ENCODE measurements at regions of chr6 and their contacts with region 1.

Region 1: GRCh38 chr6:18503593-18504231 is 116.6 kb downstream of the RNF144B start:
- DNase-seq: peak; percentile 87
- H3K4me3 Mint-ChIP-seq: peak overlapping the region; percentile 56
- H3K27ac Mint-ChIP-seq: peak overlapping the region; percentile 43
- H3K4me1 Mint-ChIP-seq: peaks cover 21% of the 10 kb centered on the region
- H3K27me3 Mint-ChIP-seq: no peaks in the 10 kb centered on the region
- CTCF ChIP-seq: peak; percentile 93

Region 2: GRCh38 chr6:17584241-17584803 is 919.4 kb before region 1 on chr6:
- CTCF ChIA-PET with region 1: interaction called, 3 read pairs
- POLR2A ChIA-PET with region 1: no interaction called
- intact Hi-C with region 1: loop called (anchors 10 kb)
- DNase-seq: peak; percentile 77
- H3K4me3 Mint-ChIP-seq: no peak overlapping the region
- H3K27ac Mint-ChIP-seq: no peak overlapping the region
- H3K4me1 Mint-ChIP-seq: peaks cover 8% of the 10 kb centered on the region
- H3K27me3 Mint-ChIP-seq: no peaks in the 10 kb centered on the region
- CTCF ChIP-seq: peak; percentile 72

Region 3: GRCh38 chr6:18264219-18264922 is 239.3 kb before region 1 on chr6 and contains the start of gene DEK:
- CTCF ChIA-PET with region 1: interaction called, 5 read pairs
- POLR2A ChIA-PET with region 1: interaction called, 11 read pairs
- intact Hi-C with region 1: loop called (anchors 1 kb)
- DNase-seq: peak; percentile 83
- H3K4me3 Mint-ChIP-seq: peak within 1 kb of the TSS; percentile 96
- H3K27ac Mint-ChIP-seq: peak within 1 kb of the TSS; percentile 81
- H3K4me1 Mint-ChIP-seq: peaks cover 36% of the 10 kb centered on the region
- H3K27me3 Mint-ChIP-seq: no peaks in the 10 kb centered on the region
- CTCF ChIP-seq: peak; percentile 61
- total RNA-seq, gene DEK: 118 and 148 TPM in 2 replicates

Region 4: DNA sequence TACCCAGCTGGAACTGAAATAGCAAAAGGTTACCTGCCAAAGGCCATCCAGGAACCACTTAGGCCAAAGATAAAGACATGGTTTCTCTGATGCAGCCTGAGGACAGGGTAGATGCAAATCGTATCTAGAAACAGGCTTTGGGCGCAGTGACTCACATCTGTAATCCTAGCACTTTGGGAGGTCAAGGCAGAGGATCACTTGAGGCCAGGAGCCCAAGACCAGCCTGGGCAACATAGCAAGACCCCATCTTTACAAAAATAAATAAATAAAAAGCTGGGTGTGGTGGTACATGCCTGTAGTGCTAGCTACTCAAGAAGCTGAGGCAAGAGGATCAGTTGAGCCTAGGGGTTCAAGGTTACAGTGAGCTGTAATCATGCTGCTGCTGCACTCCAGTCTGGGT is 169.5 kb before region 1 on chr6:
- CTCF ChIA-PET with region 1: interaction called, 11 read pairs
- POLR2A ChIA-PET with region 1: no interaction called
- intact Hi-C with region 1: no loop called
- DNase-seq: no peak
- H3K4me3 Mint-ChIP-seq: no peak overlapping the region
- H3K27ac Mint-ChIP-seq: no peak overlapping the region
- H3K4me1 Mint-ChIP-seq: no peaks in the 10 kb centered on the region
- H3K27me3 Mint-ChIP-seq: no peaks in the 10 kb centered on the region
- CTCF ChIP-seq: no peak

Region 5: DNA sequence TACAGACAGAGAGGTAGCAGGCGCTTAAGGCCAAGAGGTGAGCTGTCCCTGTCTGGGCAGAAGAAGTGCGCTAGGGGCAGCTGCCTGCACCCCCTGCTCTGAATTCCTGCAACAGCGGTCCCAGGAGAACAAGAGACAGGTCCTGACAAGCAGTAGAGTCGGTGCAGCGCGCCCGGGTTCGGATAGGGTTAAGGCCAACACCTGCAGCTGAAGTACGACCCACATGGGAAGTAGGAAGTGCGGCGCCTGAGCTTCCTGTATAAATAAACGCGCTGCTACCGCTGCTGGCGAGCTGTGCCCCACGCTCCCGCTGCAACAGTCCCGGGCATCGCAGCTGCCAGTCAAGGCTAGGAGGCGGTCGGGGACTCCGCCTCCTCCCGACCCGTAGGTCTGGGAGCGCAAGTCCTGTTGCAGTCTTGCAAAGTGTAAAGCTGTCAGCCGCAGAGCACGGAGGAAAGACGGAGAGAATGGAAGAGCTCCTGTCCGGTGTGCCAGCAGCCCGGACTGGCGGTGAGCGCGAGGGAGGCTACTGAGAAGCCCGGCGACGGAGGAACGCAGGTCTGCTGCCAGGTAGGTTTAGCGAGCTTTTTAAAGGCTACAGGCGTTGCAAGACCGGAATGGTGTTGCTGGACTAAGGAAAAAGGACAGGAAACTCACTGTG is 116.5 kb before region 1 on chr6 and contains the start of gene RNF144B:
- CTCF ChIA-PET with region 1: interaction called, 12 read pairs
- POLR2A ChIA-PET with region 1: interaction called, 31 read pairs
- intact Hi-C with region 1: loop called (anchors 1 kb)
- DNase-seq: peak; percentile 94
- H3K4me3 Mint-ChIP-seq: peak within 1 kb of the TSS; percentile 84
- H3K27ac Mint-ChIP-seq: peak within 1 kb of the TSS; percentile 73
- H3K4me1 Mint-ChIP-seq: peaks cover 17% of the 10 kb centered on the region
- H3K27me3 Mint-ChIP-seq: no peaks in the 10 kb centered on the region
- CTCF ChIP-seq: no peak
- total RNA-seq, gene RNF144B: 40.6 and 57.9 TPM in 2 replicates

Region 6: DNA sequence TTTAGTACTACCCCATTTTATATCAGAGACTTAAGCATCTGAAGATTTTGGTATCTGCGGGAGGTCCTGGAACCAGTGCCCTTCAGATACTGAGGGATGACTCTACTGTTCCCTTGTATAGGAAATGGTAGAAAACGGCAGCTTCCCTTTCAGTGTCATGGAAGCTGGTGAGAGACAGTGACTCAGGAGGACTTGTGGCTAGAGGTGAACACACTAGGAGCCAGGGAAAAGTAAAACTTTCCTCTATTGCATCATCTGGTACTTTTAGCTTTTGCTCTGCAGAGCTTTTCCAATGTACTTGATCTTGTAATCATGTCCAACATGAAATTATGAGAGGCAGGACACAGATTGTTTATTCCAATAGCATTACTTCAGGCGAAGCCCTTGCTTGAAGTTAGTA is 71.5 kb before region 1 on chr6:
- CTCF ChIA-PET with region 1: interaction called, 18 read pairs
- POLR2A ChIA-PET with region 1: interaction called, 5 read pairs
- intact Hi-C with region 1: no loop called
- DNase-seq: peak; percentile 83
- H3K4me3 Mint-ChIP-seq: peak overlapping the region; percentile 0
- H3K27ac Mint-ChIP-seq: peak overlapping the region; percentile 98
- H3K4me1 Mint-ChIP-seq: peaks cover 43% of the 10 kb centered on the region
- H3K27me3 Mint-ChIP-seq: no peaks in the 10 kb centered on the region
- CTCF ChIP-seq: no peak

Region 7: DNA sequence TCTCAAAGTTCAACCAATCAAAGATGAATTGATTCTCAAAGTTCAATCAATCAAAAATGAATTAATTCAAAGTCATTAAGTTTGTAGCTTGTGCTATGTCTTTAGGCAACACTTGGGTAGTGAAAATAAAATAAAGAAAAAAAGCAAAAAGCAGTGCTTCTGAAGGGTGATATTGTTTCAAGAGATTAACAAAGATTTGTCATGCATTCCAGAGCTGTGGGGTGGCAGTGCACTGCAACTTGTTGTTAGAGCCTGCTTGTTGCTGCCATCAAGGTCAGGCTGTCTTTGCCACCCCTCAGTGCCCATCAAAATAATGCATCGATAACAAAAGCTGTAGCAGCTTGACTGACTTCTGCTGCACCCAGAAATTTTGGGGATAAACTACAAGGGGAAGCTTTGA is 12.1 kb after region 1 on chr6:
- CTCF ChIA-PET with region 1: interaction called, 22 read pairs
- POLR2A ChIA-PET with region 1: no interaction called
- intact Hi-C with region 1: no loop called
- DNase-seq: no peak
- H3K4me3 Mint-ChIP-seq: no peak overlapping the region
- H3K27ac Mint-ChIP-seq: no peak overlapping the region
- H3K4me1 Mint-ChIP-seq: no peaks in the 10 kb centered on the region
- H3K27me3 Mint-ChIP-seq: no peaks in the 10 kb centered on the region
- CTCF ChIP-seq: no peak

Measured in MCF 10A (cell line).